Thyroid gland (tissue), 4 donors: ENCODE measurements at regions of chr6 and their contacts with region 1.

Region 1: DNA sequence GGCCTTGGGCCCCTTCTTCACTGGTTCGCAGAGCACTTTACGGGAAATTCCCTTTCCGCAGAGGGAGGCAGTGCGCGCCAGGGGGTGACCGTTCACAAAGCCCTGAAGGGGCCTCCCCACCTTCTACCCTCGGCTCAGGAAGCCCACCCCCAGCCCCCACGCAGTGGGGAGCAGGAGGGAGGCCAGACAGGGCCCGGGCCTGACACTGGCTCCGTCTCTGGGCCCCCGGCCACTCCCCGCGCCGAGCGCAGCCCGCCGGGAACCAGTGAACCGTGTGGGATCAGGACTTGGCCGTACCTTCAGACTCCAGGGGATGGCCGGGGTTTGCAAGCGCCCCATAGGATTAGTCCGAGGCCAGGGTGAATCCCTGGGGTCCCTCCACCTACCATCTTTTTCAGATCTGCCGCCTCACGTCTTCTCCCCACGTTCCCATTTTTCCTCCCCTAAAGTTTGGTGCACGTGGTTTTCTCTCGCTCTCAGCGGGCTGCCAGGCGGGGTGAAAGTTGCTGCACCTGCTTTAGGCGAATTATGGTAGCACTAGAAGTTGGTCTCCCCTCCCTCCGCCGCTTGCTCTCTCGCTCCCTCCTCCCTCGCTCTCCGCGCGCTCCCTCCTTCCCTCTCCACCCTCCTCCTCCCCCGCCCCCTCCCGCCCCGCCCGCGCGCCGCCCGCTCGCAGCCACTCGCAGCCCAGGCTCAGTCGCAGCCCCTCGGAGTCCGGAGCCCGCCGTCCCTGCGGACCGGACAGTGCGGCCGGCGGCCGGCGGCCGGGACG is at the start of gene FOXP4:
- DNase-seq: peak; percentile 92 to 94
- H3K4me3 ChIP-seq: peak within 1 kb of the TSS; percentile 82 to 96 (median 92)
- H3K27ac ChIP-seq: peak within 1 kb of the TSS; percentile 65 to 85 (median 78)
- H3K4me1 ChIP-seq: peaks cover 22 to 33% of the 10 kb centered on the region in 2 donors
- H3K27me3 ChIP-seq: no peaks in the 10 kb centered on the region
- CTCF ChIP-seq: peak in 1 of 6 experiments; percentile 9
- POLR2A ChIP-seq: peak in 1 of 2 donors; percentile 27
- total RNA-seq, gene FOXP4: 12.6 to 42.4 (median 23.7) TPM

Region 2: DNA sequence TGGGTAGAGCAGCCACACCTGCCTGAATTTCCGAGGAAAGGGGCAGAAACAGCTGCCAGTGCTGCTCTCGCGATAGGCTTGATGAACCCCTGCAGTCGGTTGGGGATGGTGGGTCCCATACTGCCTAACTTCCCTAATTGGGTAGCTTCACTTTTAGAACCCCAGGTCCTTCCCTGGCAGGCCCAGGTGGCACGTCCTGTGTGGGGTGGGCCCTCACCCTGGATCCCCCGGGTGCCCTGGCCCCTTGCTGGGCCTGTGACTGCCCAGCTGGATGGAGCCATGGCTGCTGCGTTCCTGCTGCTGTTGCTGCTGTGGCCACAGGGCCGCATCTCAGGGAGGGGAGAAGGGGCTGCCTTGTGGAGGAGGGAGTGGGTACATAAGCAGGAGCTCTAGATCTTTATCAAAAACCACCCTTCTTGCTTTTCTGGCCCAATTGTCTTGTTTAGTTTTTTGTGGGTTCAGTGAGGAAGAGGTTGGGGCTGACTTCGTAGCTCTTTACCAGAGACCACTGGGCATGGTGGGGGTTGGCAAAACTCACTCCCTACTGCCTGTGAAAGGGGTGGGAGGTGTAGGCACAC is 298.5 kb before region 1 on chr6:
- intact Hi-C with region 1: no loop called
- DNase-seq: no peak
- H3K4me3 ChIP-seq: no peak overlapping the region
- H3K27ac ChIP-seq: no peak overlapping the region
- H3K4me1 ChIP-seq: no peaks in the 10 kb centered on the region
- H3K27me3 ChIP-seq: no peaks in the 10 kb centered on the region
- CTCF ChIP-seq: no peak
- POLR2A ChIP-seq: no peak

Region 3: GRCh38 chr6:41505122-41506049 is 40.5 kb before region 1 on chr6:
- intact Hi-C with region 1: loop called (anchors 5 kb)
- DNase-seq: peak; percentile 73 to 74
- H3K4me3 ChIP-seq: peak overlapping the region in 1 of 3 donors; percentile 22
- H3K27ac ChIP-seq: peak overlapping the region; percentile 33 to 92 (median 72)
- H3K4me1 ChIP-seq: peaks cover 18 to 26% of the 10 kb centered on the region in 2 donors
- H3K27me3 ChIP-seq: no peaks in the 10 kb centered on the region
- CTCF ChIP-seq: no peak
- POLR2A ChIP-seq: peak in 1 of 2 donors; percentile 27

Region 4: DNA sequence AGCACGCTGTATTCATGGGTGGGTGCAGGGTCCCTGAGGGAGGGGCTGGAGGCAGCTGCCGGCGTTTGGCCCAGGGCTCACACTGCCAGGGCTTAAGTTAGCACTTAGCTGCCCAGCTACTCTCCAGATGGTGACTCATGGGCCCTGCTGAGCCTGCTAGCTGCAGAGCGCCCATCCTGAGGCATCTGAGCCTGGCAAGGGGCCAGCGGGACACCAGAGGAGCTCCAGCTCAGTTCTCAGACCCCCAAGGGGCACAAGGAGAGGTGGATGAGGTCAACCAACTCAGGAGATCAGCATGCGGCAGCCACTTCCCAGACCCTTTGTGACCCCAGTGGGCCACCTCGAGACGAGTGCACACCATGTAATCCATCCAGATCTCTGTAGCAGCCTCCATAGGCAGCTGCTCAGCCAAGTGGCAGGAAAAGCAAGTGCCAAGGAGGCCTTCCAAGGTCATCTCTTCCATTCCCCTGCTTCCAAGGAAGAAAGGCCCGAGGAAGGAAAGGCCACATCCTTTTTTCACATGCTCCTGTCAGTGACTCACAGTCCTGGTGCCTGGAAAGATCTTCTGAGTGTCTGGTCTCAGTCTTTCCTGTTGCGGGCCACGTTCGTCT is 35.6 kb after region 1 on chr6:
- intact Hi-C with region 1: loop called (anchors 5 kb)
- DNase-seq: peak; percentile 91 to 92
- H3K4me3 ChIP-seq: no peak overlapping the region
- H3K27ac ChIP-seq: peak overlapping the region; percentile 27 to 56 (median 40)
- H3K4me1 ChIP-seq: peaks cover 28 to 58% of the 10 kb centered on the region in 2 donors
- H3K27me3 ChIP-seq: no peaks in the 10 kb centered on the region
- CTCF ChIP-seq: no peak
- POLR2A ChIP-seq: no peak